B cell (primary cell): ENCODE measurements at regions of chr20 and their contacts with region 1.

Region 1: DNA sequence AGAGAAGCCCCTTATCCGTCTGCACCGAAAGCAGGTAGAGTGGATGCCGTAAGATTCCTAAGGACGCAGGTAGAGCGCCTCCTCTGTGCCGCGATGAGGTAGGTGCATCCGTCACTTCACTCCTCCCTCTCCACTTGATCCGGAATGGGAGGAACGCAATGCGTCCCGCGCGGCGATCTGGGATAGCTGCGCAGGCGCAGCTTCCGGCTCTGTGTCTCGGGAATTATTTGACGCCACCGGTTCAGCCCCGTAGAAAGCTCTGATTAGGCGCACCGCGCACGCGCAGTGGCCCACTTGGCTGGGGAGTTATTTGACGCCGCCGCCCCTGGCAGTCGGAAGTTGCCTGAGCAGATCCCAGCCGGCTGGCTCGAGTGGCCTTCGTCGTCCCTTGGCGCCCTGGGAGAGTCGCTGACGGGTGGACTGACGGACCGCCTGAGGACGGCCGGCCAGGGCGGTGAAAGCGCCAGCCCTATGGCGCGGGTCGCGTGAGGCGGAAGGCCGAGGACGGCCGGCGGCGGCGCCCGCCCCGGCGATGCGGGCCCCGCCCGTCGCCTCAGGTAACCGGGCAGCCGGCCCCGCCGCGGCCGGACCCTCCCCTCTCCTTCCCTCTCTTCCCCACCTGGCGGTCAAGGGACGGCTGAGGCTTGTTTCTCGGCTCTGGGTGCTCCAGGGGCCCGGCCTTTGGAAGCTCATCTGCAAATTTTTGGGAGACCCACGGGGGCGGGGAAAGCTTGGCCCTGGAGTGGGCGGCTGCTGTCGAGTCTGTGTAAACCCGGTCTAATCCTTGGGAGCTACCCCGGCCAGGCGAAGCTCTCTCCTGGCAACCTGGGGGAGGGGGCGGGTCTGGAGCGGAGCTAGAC is at the start of gene RALGAPB:
- DNase-seq: peak; percentile 98
- ATAC-seq: peak; percentile 94
- H3K4me3 ChIP-seq: peak within 1 kb of the TSS; percentile 77 to 91 (median 84)
- H3K4me3 Mint-ChIP-seq: peak within 1 kb of the TSS; percentile 92
- H3K27ac ChIP-seq: peak within 1 kb of the TSS; percentile 52 to 84
- H3K27ac Mint-ChIP-seq: peak within 1 kb of the TSS; percentile 83
- H3K4me1 ChIP-seq: peaks cover 17 to 26% of the 10 kb centered on the region in 2 donors
- H3K4me1 Mint-ChIP-seq: peaks cover 45% of the 10 kb centered on the region
- H3K27me3 ChIP-seq: no peaks in the 10 kb centered on the region
- H3K27me3 Mint-ChIP-seq: no peaks in the 10 kb centered on the region
- CTCF ChIP-seq: no peak
- total RNA-seq, gene RALGAPB: 58.3 and 63.4 TPM in 2 replicates

Region 2: DNA sequence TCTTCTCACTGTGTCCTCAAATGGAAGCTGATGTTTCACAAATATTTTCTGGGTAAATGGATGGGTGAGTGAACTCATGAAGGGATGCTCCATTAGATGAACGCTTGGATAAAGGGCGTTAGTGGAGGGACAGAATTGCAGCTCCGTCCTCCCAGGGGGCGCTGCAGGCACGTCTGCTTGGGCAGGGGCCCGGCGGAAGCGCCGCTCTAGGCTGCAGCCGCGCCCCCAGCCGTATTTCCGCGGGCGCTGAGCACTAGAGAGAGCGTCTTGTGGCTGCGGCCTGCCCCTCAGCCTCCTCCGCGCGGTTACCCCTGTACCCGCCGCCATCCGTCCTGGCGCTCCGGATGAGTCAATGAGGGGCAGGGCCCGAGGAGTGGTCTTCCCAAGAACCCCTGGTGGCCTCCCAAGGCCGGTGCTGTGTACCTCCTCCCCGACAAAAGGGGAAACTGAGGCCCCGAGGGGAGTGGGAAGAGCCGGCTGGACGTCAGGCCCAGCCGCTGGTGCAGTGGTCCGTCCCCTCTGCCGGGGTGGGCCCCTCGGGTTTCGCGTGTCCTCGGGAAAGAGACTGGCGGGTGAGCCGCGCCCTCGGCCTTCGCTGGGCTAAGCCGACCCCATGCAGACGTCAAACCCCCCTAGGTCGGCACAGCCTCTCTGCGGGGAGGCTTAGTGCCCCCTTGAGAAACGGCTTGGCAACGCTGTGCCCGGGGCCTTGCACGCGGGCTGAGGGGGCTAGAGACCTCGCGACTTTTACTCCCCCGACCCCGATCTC is 26.1 kb before region 1 on chr20:
- CTCF ChIA-PET with region 1: interaction called, 40 read pairs
- POLR2A ChIA-PET with region 1: interaction called, 17 read pairs
- intact Hi-C with region 1: loop called (anchors 1 kb)
- DNase-seq: peak; percentile 94
- ATAC-seq: peak; percentile 94
- H3K4me3 ChIP-seq: peak overlapping the region; percentile 47 to 92 (median 80)
- H3K4me3 Mint-ChIP-seq: peak overlapping the region; percentile 94
- H3K27ac ChIP-seq: peak overlapping the region; percentile 54 to 75
- H3K27ac Mint-ChIP-seq: peak overlapping the region; percentile 94
- H3K4me1 ChIP-seq: peaks cover 22 to 29% of the 10 kb centered on the region in 2 donors
- H3K4me1 Mint-ChIP-seq: peaks cover 21% of the 10 kb centered on the region
- H3K27me3 ChIP-seq: peaks cover 0 to 3% (median 0%) of the 10 kb centered on the region in 4 experiments
- H3K27me3 Mint-ChIP-seq: peaks cover 7% of the 10 kb centered on the region
- CTCF ChIP-seq: peak; percentile 94

Region 3: GRCh38 chr20:38523697-38524096 is 51.0 kb after region 1 on chr20:
- CTCF ChIA-PET with region 1: no interaction called
- POLR2A ChIA-PET with region 1: no interaction called
- intact Hi-C with region 1: no loop called
- DNase-seq: no peak
- ATAC-seq: no peak
- H3K4me3 ChIP-seq: no peak overlapping the region
- H3K4me3 Mint-ChIP-seq: no peak overlapping the region
- H3K27ac ChIP-seq: no peak overlapping the region
- H3K27ac Mint-ChIP-seq: no peak overlapping the region
- H3K4me1 ChIP-seq: no peaks in the 10 kb centered on the region
- H3K4me1 Mint-ChIP-seq: no peaks in the 10 kb centered on the region
- H3K27me3 ChIP-seq: no peaks in the 10 kb centered on the region
- H3K27me3 Mint-ChIP-seq: no peaks in the 10 kb centered on the region
- CTCF ChIP-seq: no peak

Region 4: GRCh38 chr20:38685853-38686473 is 213.2 kb after region 1 on chr20:
- CTCF ChIA-PET with region 1: no interaction called
- POLR2A ChIA-PET with region 1: no interaction called
- intact Hi-C with region 1: no loop called
- DNase-seq: peak; percentile 36
- ATAC-seq: no peak
- H3K4me3 ChIP-seq: no peak overlapping the region
- H3K4me3 Mint-ChIP-seq: no peak overlapping the region
- H3K27ac ChIP-seq: no peak overlapping the region
- H3K27ac Mint-ChIP-seq: no peak overlapping the region
- H3K4me1 ChIP-seq: no peaks in the 10 kb centered on the region
- H3K4me1 Mint-ChIP-seq: no peaks in the 10 kb centered on the region
- H3K27me3 ChIP-seq: peaks cover 0 to 42% (median 19%) of the 10 kb centered on the region in 4 experiments
- H3K27me3 Mint-ChIP-seq: peaks cover 70% of the 10 kb centered on the region
- CTCF ChIP-seq: no peak

Region 5: GRCh38 chr20:39019805-39020325 is 547.1 kb after region 1 on chr20:
- CTCF ChIA-PET with region 1: no interaction called
- POLR2A ChIA-PET with region 1: no interaction called
- intact Hi-C with region 1: no loop called
- DNase-seq: no peak
- ATAC-seq: no peak
- H3K4me3 ChIP-seq: no peak overlapping the region
- H3K4me3 Mint-ChIP-seq: no peak overlapping the region
- H3K27ac ChIP-seq: no peak overlapping the region
- H3K27ac Mint-ChIP-seq: no peak overlapping the region
- H3K4me1 ChIP-seq: no peaks in the 10 kb centered on the region
- H3K4me1 Mint-ChIP-seq: no peaks in the 10 kb centered on the region
- H3K27me3 ChIP-seq: no peaks in the 10 kb centered on the region
- H3K27me3 Mint-ChIP-seq: no peaks in the 10 kb centered on the region
- CTCF ChIP-seq: no peak